Mammary epithelial cell (primary cell): ENCODE measurements at regions of chr17 and their contacts with region 1.

Region 1: DNA sequence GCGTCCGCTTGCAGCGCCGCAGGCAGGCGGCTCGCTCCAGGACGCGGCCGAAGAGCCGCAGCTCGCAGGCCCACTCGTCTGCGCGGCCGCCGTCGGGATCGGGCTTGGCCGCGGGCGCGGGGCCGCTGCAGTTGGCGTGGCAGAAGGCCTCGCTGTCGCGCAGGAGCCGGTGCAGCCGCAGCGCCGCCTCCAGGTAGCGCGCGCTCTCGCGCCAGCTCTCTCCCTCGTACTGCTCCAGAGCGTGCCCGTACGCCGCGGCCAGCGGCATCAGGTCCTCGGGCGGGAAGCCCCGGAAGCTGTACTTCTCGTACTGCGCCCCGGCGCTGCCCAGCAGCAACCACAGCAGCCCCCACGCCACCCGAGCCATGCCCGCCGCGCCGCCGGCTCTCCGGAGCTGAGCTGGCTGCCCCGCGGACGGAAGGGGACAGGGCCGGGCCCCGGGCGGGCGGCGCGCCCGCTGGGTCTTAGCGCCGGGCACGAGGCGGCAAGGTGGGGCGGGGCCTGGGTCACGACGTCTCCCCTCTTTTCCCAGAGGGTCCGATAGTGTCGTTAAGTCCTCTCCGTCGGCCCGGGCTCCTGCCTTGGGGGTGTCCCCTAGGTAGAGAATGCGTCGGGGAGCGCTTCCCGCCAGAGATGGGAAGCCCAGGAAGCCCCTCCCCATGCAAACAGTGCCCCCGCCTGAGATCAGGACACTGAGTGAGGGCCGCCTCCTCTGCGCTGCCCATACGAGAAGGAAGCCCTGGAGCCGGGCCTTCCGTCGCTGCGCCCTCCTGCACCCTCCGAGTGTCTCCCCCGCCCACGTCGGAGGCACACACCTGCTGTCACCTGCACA is at the start of gene P3H4:
- DNase-seq: peak; percentile 79
- H3K4me3 ChIP-seq: peak within 1 kb of the TSS; percentile 66 to 81 (median 69)
- H3K27ac ChIP-seq: peak within 1 kb of the TSS; percentile 61
- H3K4me1 ChIP-seq: peaks cover 25% of the 10 kb centered on the region
- H3K27me3 ChIP-seq: no peaks in the 10 kb centered on the region
- CTCF ChIP-seq: peak; percentile 39 to 79
- total RNA-seq, gene P3H4: 30.5 to 42.3 TPM

Region 2: GRCh38 chr17:41773190-41773588 is 38.6 kb before region 1 on chr17:
- CTCF ChIA-PET with region 1: no interaction called
- dilution Hi-C with region 1: no loop called
- in situ Hi-C with region 1: loop called in 1 of 2 experiments (anchors 5 kb)
- intact Hi-C with region 1: loop called (anchors 2 kb)
- DNase-seq: peak; percentile 99
- H3K4me3 ChIP-seq: no peak overlapping the region
- H3K27ac ChIP-seq: peak overlapping the region; percentile 93
- H3K4me1 ChIP-seq: peaks cover 63% of the 10 kb centered on the region
- H3K27me3 ChIP-seq: no peaks in the 10 kb centered on the region
- CTCF ChIP-seq: no peak

Region 3: DNA sequence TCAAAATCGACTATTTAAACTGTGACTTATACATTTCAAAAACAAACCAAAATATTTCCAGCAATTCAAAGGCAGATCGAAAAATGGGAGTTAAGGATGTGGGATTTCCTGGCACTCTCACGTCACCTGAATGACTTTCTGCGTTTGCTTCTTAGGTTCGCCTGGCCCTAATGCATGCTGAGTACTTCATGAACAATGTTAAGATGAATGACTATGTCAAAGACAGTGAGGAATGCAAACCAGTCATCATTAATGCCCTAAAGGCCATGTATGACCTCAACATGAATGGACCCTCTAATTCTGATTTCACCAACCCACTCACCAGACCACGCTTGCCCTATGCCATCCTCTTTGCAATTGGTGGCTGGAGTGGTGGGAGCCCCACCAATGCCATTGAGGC is 33.2 kb after region 1 on chr17:
- CTCF ChIA-PET with region 1: no interaction called
- dilution Hi-C with region 1: loop called (anchors 5 kb)
- in situ Hi-C with region 1: no loop called
- intact Hi-C with region 1: no loop called
- DNase-seq: no peak
- H3K4me3 ChIP-seq: no peak overlapping the region
- H3K27ac ChIP-seq: no peak overlapping the region
- H3K4me1 ChIP-seq: no peaks in the 10 kb centered on the region
- H3K27me3 ChIP-seq: no peaks in the 10 kb centered on the region
- CTCF ChIP-seq: no peak

Region 4: DNA sequence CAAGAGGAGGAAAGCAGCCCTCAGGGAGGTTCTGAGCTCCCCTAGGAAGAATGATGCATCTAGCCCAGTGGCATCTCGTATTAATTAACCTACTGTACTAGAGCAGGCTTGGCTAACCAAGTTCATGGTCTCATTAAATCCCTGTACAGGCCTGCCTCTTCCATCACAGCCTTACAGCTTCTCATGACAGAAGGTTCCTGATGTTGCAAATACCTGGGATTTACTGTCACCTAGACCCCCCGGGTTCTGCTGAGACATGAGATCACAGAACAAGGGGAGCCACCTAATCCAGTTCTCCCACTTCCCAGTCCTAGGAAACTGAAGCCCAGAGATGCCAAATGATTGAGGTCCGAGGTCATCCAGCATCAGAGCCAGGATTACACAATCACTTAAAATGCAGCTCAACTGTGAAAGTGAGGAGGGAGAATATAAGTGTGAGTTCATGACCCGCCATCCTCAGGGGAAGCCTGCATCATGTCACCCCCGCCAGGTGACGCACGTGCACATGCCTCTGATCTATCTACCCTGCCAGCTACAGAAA is 83.1 kb after region 1 on chr17:
- CTCF ChIA-PET with region 1: no interaction called
- dilution Hi-C with region 1: loop called (anchors 5 kb)
- in situ Hi-C with region 1: no loop called
- intact Hi-C with region 1: no loop called
- DNase-seq: no peak
- H3K4me3 ChIP-seq: no peak overlapping the region
- H3K27ac ChIP-seq: no peak overlapping the region
- H3K4me1 ChIP-seq: no peaks in the 10 kb centered on the region
- H3K27me3 ChIP-seq: no peaks in the 10 kb centered on the region
- CTCF ChIP-seq: no peak

Region 5: DNA sequence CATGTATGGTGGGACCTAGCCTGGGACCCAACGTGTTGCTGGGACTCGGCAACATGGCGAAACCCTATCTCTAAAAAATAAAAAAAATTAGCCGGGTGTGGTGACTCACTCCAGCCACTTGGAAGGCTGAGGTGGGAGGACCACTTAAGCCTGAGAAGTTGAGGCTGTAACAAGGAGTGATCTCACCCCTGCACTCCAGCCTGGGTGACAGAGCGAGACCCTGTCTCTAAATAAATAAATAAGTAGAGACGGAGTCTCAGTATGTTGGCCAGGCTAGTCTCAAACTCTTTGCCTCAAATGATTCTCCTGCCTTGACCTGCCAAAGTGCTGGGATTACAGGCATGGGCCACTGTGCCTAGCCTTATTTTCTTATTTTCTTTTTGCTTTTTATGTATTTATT is 144.8 kb after region 1 on chr17:
- CTCF ChIA-PET with region 1: no interaction called
- dilution Hi-C with region 1: no loop called
- in situ Hi-C with region 1: no loop called
- intact Hi-C with region 1: no loop called
- DNase-seq: no peak
- H3K4me3 ChIP-seq: no peak overlapping the region
- H3K27ac ChIP-seq: no peak overlapping the region
- H3K4me1 ChIP-seq: peaks cover 10% of the 10 kb centered on the region
- H3K27me3 ChIP-seq: no peaks in the 10 kb centered on the region
- CTCF ChIP-seq: no peak

Region 6: GRCh38 chr17:41966463-41967140 is 154.8 kb after region 1 on chr17 and contains the start of gene CNP:
- CTCF ChIA-PET with region 1: no interaction called
- dilution Hi-C with region 1: no loop called
- in situ Hi-C with region 1: no loop called
- intact Hi-C with region 1: loop called (anchors 5 kb)
- DNase-seq: peak; percentile 92
- H3K4me3 ChIP-seq: peak within 1 kb of the TSS; percentile 77 to 93 (median 80)
- H3K27ac ChIP-seq: peak within 1 kb of the TSS; percentile 82
- H3K4me1 ChIP-seq: peaks cover 25% of the 10 kb centered on the region
- H3K27me3 ChIP-seq: no peaks in the 10 kb centered on the region
- CTCF ChIP-seq: no peak
- total RNA-seq, gene CNP: 61.7 to 72.6 TPM